Left cardiac atrium (tissue), 4 donors: ENCODE measurements at regions of chr2 and their contacts with region 1.

Region 1: GRCh38 chr2:41966431-41966893 is 81.4 kb upstream of the PKDCC start:
- DNase-seq: peak; percentile 94
- ATAC-seq: peak; percentile 78 to 90

Region 2: DNA sequence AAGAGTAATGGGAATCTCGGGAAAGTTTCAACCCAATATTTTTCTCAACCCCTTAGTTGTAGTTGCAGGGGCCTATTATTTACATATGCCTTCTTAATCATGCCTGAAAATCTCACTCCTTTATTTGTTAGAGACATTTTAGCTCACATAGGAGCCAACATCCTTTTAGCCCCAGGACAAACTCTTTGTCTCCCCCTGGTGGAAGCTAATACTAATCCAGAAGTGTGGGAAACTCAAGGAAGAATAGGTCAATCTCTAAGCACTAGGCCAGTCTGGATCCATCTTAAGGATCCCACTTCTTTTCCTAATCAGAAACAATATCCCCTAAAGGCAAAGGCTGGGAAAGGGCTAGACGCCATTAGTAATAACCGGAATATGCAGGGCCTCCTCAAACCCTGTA is 469.6 kb before region 1 on chr2:
- intact Hi-C with region 1: no loop called
- DNase-seq: no peak
- ATAC-seq: no peak

Region 3: DNA sequence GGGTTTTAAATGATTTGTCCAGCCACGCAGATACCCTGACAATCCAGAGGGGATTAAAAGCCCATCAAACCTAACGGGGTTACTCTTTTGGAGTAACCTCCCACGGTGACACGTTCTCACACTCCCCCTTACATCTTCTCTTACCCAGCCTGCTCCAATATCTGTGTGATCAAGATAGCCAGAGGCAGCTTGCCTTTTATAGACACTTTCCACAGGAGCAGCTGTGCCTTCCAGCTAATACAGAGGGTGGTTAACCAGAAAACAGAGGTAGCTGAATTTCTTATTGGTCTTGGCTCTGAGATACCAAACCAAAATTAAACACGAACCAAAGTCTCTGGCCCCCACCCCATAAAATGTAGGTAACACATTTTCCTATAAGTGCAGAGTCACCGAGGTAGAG is 151.5 kb before region 1 on chr2:
- intact Hi-C with region 1: no loop called
- DNase-seq: no peak
- ATAC-seq: no peak

Region 4: DNA sequence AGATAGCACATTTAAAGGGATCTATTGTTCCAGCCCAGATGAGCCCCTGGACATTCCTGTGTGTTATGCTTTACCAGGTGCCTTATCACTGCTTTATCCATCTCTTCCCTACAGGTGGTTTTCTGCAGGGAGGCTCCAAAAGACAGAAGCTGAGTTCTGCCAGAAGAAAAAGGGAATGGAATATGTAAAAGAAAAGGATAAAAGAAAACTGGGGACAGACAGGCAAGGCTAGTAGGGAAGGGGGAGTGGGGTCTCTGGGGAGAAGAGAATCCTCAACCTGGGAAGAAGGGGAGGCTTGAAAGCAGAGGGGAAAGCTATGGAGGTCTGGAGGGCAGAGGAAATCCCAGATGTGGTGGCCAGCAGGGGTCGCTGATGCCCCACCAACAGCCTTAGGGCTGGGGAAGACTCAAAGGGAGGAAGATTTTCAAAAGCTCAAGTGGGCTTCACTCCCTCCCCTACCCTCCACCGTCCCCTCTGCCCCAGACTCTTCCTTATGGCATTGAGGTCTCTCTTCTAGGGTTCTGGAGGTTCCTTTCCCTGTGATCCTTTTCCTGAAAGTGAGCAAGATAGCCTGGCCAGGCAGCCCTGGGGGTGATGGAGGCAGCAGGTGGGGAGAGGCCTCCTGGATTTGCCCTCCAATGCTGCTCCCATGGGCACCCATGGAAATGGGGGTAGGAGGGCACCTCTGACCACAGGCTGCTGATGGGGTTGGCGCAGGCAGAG is 96.8 kb before region 1 on chr2:
- intact Hi-C with region 1: loop called in 1 of 2 experiments (anchors 5 kb)
- DNase-seq: peak; percentile 79
- ATAC-seq: peak; percentile 88 to 90

Region 5: GRCh38 chr2:41922177-41922576 is 44.3 kb before region 1 on chr2:
- intact Hi-C with region 1: no loop called
- DNase-seq: no peak
- ATAC-seq: peak in 1 of 2 donors; percentile 62

Region 6: DNA sequence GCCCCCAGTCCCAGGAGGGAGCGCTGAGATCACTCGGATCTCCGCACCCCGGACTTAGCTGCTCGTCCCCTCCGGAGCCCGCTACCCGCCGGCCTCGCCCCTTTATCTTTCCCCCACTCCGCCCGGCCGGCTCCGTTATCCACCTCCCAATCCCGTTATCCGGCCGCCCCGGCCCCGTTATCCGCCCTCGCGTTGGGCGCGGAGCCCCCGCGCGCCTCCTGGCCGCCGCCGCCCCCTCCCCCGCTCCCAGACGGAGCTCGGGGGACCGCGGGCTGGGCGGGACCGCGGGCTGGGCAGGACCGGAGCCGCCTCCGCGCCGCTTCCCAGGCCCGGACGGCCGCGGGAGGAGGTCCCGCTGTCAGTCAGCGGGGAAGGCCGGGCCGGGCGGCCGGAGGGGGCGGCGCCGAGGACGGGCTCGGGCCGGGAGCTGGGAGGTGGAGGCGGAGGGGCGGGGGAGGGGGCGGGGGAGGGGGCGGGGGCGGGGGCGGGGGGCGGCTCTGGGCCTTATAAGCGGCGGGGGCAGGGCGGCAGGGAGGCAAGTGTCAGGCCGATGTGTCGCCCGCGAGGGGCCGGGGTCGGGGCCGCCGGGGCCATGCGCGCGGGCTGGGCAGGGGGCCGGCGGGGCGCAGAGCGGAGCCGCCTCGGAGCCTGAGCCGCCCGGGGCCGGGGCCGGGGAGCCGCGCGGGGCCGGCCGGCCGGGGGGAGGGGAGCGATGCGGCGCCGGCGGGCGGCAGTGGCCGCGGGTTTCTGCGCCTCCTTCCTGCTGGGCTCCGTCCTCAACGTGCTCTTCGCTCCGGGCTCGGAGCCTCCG is 81.2 kb after region 1 on chr2 and contains the start of gene PKDCC:
- intact Hi-C with region 1: loop called in 1 of 2 experiments (anchors 10 kb)
- DNase-seq: peak; percentile 90
- ATAC-seq: peak; percentile 85 to 86
- total RNA-seq, gene PKDCC: 138 to 209 TPM